IMR-90 (cell line): ENCODE measurements at regions of chr13 and their contacts with region 1.

Region 1: GRCh38 chr13:106445996-106446395 is 89.5 kb downstream of the EFNB2 start:
- DNase-seq: peak; percentile 65
- ATAC-seq: peak; percentile 80
- H3K4me3 ChIP-seq: no peak overlapping the region
- H3K27ac ChIP-seq: no peak overlapping the region
- H3K4me1 ChIP-seq: no peaks in the 10 kb centered on the region; the same call in 1 of the 2 replicates
- H3K27me3 ChIP-seq: peaks cover under 1% of the 10 kb centered on the region; the same call in 1 of the 2 replicates
- CTCF ChIP-seq: no peak
- POLR2A ChIP-seq: no peak
- RAD21 ChIP-seq: no peak

Region 2: GRCh38 chr13:106337096-106337850 is 108.7 kb before region 1 on chr13:
- CTCF ChIA-PET with region 1: no interaction called
- POLR2A ChIA-PET with region 1: no interaction called
- dilution Hi-C with region 1: no loop called
- in situ Hi-C with region 1: no loop called
- intact Hi-C with region 1: no loop called
- DNase-seq: peak; percentile 75
- ATAC-seq: peak; percentile 93
- H3K4me3 ChIP-seq: no peak overlapping the region
- H3K27ac ChIP-seq: no peak overlapping the region
- H3K4me1 ChIP-seq: peaks cover 2% of the 10 kb centered on the region; the same call in 1 of the 2 replicates
- H3K27me3 ChIP-seq: no peaks in the 10 kb centered on the region
- CTCF ChIP-seq: no peak
- POLR2A ChIP-seq: no peak
- RAD21 ChIP-seq: no peak

Region 3: GRCh38 chr13:106649495-106649894 is 203.5 kb after region 1 on chr13:
- CTCF ChIA-PET with region 1: no interaction called
- POLR2A ChIA-PET with region 1: no interaction called
- dilution Hi-C with region 1: no loop called
- in situ Hi-C with region 1: no loop called
- intact Hi-C with region 1: no loop called
- DNase-seq: peak; percentile 22
- ATAC-seq: no peak
- H3K4me3 ChIP-seq: no peak overlapping the region
- H3K27ac ChIP-seq: no peak overlapping the region
- H3K4me1 ChIP-seq: no peaks in the 10 kb centered on the region
- H3K27me3 ChIP-seq: no peaks in the 10 kb centered on the region; the same call in 1 of the 2 replicates
- CTCF ChIP-seq: no peak
- POLR2A ChIP-seq: no peak
- RAD21 ChIP-seq: no peak

Region 4: DNA sequence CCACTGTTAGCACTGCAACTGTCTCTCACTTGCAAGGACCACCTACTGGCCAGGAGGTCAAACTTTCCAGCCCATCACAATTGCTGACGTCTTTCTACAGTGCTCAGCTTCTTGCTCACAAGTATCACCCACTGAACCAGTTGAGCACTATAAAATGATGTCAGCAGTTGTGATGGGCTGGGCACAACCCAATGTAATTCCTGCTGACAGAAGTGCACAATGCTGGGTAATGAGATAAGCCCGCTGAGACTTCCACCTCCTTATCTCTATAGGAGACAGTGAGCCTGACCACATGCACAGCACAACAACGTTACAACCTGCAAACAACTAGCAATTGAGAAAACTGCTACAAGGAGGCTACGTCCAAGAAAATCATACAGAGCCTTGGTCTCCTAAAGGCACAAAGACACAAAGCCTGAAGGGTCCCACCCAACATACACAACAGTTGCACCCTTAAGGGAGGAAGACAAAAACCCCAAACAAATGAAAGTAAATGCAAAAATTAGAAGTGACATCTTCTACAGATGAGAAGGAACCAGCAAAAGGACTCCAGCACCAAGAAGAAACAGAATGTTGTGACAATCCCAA is 1496.1 kb after region 1 on chr13:
- CTCF ChIA-PET with region 1: no interaction called
- POLR2A ChIA-PET with region 1: interaction called, 10 read pairs
- dilution Hi-C with region 1: no loop called
- in situ Hi-C with region 1: no loop called
- intact Hi-C with region 1: no loop called
- DNase-seq: no peak
- ATAC-seq: no peak
- H3K4me3 ChIP-seq: no peak overlapping the region
- H3K27ac ChIP-seq: no peak overlapping the region
- H3K4me1 ChIP-seq: no peaks in the 10 kb centered on the region
- H3K27me3 ChIP-seq: peaks cover 15% of the 10 kb centered on the region
- CTCF ChIP-seq: no peak
- POLR2A ChIP-seq: no peak
- RAD21 ChIP-seq: no peak